ENCODE measurements at regions of chr1 and their contacts with region 1.

Region 1: DNA sequence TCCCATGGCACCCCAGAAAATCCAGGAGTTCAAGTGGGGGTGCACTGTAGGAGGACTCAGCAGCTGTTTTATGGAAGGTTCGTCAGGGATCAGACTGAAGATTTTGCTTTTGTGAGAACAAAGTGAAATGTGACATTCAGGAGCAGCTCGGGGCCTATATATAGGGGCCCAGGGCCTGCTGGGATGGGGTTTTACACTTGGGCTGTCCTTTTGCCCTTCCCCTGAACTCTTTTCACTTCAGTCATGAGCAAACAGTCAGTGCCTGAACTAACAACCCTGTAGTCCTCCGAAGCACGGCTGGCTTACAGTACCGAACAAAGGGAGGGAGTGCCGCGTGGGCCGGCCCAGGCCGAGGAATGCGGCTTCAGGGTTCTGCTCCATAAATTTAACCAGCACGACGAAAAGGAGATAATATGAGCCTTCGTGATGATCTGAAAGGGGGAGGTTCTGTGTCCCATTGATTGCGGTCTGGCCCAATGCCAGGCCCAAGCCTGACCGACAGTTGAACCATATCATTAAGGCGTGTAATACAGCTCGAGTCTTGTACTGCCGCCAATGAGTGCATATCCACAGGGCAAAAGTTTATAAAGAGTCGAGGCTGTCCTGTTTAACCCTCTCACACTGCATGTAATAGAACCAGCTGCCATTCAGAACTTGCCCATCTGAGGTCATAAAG is 139.9 kb downstream of the DHRS3 start:
- H3K4me3 ChIP-seq: no peak overlapping the region
- H3K27ac ChIP-seq: peak overlapping the region; percentile 73
- H3K4me1 ChIP-seq: peaks cover 32% of the 10 kb centered on the region
- CTCF ChIP-seq: no peak

Region 2: GRCh38 chr1:12458571-12458970 is 19.5 kb before region 1 on chr1:
- CTCF ChIA-PET with region 1: interaction called, 11 read pairs
- POLR2A ChIA-PET with region 1: interaction called, 4 read pairs
- H3K4me3 ChIP-seq: no peak overlapping the region
- H3K27ac ChIP-seq: no peak overlapping the region
- H3K4me1 ChIP-seq: peaks cover 15% of the 10 kb centered on the region
- CTCF ChIP-seq: no peak

Region 3: GRCh38 chr1:12596007-12596821 is 118.1 kb after region 1 on chr1:
- CTCF ChIA-PET with region 1: interaction called, 3 read pairs
- POLR2A ChIA-PET with region 1: interaction called, 15 read pairs
- H3K4me3 ChIP-seq: peak overlapping the region; percentile 23
- H3K27ac ChIP-seq: peak overlapping the region; percentile 83
- H3K4me1 ChIP-seq: peaks cover 8% of the 10 kb centered on the region
- CTCF ChIP-seq: no peak